B cell (primary cell): ENCODE measurements at regions of chr7 and their contacts with region 1.

Region 1: DNA sequence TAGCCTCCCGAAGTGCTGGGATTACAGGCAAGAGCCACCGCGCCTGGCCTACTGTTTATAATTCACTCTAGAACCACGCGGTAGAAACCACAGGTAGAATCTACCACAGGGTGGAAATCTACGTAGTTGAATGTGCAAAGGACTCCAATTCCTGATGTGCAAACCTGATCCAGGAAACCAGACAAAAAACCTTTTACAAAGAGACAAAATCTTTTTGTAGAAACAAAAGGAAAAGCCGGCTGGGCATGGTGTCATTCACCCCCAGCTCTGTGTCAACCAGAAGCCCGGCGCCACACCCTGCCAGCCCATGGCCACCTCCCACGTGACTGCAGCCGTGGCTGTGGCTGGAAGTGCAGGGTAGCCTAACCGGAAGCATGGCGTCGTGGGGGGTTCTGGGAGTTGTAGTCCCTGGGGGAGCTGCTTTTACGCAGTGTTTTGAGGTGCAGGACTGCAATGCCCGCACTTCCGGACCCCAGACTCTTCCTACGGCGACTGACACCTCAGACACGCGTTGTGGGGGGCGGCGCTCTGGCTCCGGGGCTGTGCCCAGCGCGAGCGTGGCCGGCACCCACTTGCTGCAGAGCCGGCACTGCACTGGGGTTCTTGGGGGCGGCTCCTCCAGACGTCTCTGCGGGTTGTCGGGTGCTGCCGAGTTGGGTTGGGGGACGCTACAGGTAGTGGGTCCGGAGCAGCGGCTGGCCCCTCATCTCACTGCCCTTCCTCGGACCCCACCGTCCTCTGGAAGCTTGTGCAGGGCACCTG is 41.5 kb upstream of the RNF216 start:
- DNase-seq: peak; percentile 95
- ATAC-seq: peak; percentile 99
- H3K4me3 ChIP-seq: peak overlapping the region; percentile 47 to 85 (median 81)
- H3K4me3 Mint-ChIP-seq: peak overlapping the region; percentile 91
- H3K27ac ChIP-seq: peak overlapping the region; percentile 78 to 85
- H3K27ac Mint-ChIP-seq: peak overlapping the region; percentile 93
- H3K4me1 ChIP-seq: peaks cover 0 to 19% of the 10 kb centered on the region in 2 donors
- H3K4me1 Mint-ChIP-seq: peaks cover 18% of the 10 kb centered on the region
- H3K27me3 ChIP-seq: no peaks in the 10 kb centered on the region
- H3K27me3 Mint-ChIP-seq: no peaks in the 10 kb centered on the region
- CTCF ChIP-seq: no peak

Region 2: DNA sequence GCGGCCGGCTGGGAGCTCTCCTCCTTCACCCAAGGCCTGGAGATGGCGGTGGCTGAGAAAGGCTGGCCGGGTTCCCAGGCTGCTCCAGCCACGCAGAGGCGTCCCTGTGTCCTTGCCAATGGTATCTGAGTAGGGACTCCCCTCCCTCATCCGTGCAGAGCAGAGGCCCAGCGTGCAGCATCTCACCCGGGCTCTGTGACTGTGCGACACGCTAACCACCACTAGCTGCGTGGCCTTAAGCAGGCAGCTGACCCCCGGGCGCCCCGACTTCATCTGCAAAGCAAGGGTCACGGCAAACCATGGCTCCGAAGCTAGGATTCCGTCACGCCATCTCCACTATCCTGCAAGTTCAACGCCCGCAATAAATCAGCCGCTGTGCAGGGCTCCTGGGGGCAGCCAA is 352.1 kb before region 1 on chr7:
- CTCF ChIA-PET with region 1: no interaction called
- POLR2A ChIA-PET with region 1: interaction called, 10 read pairs
- intact Hi-C with region 1: no loop called
- DNase-seq: no peak
- ATAC-seq: no peak
- H3K4me3 ChIP-seq: no peak overlapping the region
- H3K4me3 Mint-ChIP-seq: no peak overlapping the region
- H3K27ac ChIP-seq: no peak overlapping the region
- H3K27ac Mint-ChIP-seq: no peak overlapping the region
- H3K4me1 ChIP-seq: no peaks in the 10 kb centered on the region
- H3K4me1 Mint-ChIP-seq: no peaks in the 10 kb centered on the region
- H3K27me3 ChIP-seq: no peaks in the 10 kb centered on the region
- H3K27me3 Mint-ChIP-seq: no peaks in the 10 kb centered on the region
- CTCF ChIP-seq: no peak

Region 3: GRCh38 chr7:5670183-5670935 is 152.6 kb before region 1 on chr7:
- CTCF ChIA-PET with region 1: no interaction called
- POLR2A ChIA-PET with region 1: no interaction called
- intact Hi-C with region 1: no loop called
- DNase-seq: peak; percentile 45
- ATAC-seq: peak; percentile 62
- H3K4me3 ChIP-seq: no peak overlapping the region
- H3K4me3 Mint-ChIP-seq: peak overlapping the region; percentile 13
- H3K27ac ChIP-seq: peak overlapping the region in 1 of 2 donors; percentile 20
- H3K27ac Mint-ChIP-seq: peak overlapping the region; percentile 85
- H3K4me1 ChIP-seq: peaks cover 8 to 14% of the 10 kb centered on the region in 2 donors
- H3K4me1 Mint-ChIP-seq: peaks cover 19% of the 10 kb centered on the region
- H3K27me3 ChIP-seq: no peaks in the 10 kb centered on the region
- H3K27me3 Mint-ChIP-seq: no peaks in the 10 kb centered on the region
- CTCF ChIP-seq: no peak

Region 4: DNA sequence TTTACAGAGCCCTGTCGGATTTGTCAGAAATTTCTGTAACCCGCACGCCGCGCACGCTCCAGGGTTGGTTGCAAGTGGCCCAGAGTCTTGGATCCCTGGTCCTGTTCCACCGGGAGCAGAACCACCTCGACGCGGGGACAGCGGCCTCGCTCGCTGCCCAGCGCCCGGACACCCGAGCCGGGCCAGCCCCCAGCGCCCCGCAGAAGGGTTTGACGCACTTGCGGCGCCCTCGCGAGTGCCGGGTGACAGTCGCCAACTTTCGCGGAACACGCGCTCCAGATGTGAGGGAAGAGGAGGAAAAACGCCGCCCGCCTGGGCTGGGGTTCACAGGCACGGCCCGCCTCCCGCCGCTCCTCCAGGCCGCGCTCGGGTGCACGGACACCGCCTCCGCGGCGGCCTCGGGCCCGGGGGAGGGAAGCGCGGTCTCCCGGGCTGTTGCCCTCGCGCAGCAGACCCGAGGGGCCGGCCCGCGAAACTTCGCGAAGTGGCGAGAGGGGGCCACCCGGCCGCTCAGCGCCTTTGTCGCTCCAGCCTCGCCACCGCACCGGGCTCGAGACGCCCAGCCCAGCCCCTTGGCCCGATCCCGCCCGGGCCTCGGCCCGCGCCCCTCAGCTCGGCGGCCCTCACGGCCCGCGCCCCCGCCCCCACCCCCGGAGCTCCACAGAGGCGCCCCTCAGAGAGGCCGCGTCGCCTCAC is 42.0 kb before region 1 on chr7:
- CTCF ChIA-PET with region 1: interaction called, 6 read pairs
- POLR2A ChIA-PET with region 1: interaction called, 6 read pairs
- intact Hi-C with region 1: loop called (anchors 1 kb)
- DNase-seq: no peak
- ATAC-seq: peak; percentile 34
- H3K4me3 ChIP-seq: peak overlapping the region in 4 of 5 experiments; percentile 44 to 87 (median 64)
- H3K4me3 Mint-ChIP-seq: peak overlapping the region; percentile 88
- H3K27ac ChIP-seq: peak overlapping the region; percentile 36 to 83
- H3K27ac Mint-ChIP-seq: peak overlapping the region; percentile 91
- H3K4me1 ChIP-seq: peaks cover 9 to 29% of the 10 kb centered on the region in 2 donors
- H3K4me1 Mint-ChIP-seq: peaks cover 42% of the 10 kb centered on the region
- H3K27me3 ChIP-seq: no peaks in the 10 kb centered on the region
- H3K27me3 Mint-ChIP-seq: no peaks in the 10 kb centered on the region
- CTCF ChIP-seq: no peak

Region 5: DNA sequence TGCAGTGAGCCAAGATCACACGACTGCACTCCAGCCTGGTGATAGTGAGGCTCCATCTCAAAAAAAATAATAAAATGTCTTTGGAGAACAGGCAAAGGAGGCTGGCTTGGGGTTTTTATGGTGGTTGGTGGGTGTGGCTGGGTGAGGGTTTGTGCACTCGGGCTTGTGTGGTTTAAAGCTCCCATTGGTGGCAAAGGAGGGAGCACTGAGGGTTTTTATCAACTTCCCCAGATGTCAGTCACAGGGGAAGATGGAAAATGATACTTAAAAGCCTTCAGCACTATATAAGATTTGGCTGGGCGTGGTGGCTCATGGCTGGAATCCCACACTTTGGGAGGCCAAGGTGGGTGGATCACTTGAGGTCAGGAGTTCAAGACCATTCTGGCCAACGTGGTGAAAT is 25.2 kb before region 1 on chr7:
- CTCF ChIA-PET with region 1: no interaction called
- POLR2A ChIA-PET with region 1: no interaction called
- intact Hi-C with region 1: no loop called
- DNase-seq: no peak
- ATAC-seq: no peak
- H3K4me3 ChIP-seq: no peak overlapping the region
- H3K4me3 Mint-ChIP-seq: no peak overlapping the region
- H3K27ac ChIP-seq: no peak overlapping the region
- H3K27ac Mint-ChIP-seq: no peak overlapping the region
- H3K4me1 ChIP-seq: no peaks in the 10 kb centered on the region
- H3K4me1 Mint-ChIP-seq: no peaks in the 10 kb centered on the region
- H3K27me3 ChIP-seq: no peaks in the 10 kb centered on the region
- H3K27me3 Mint-ChIP-seq: peaks cover 2% of the 10 kb centered on the region
- CTCF ChIP-seq: no peak